ENCODE measurements at regions of chr13 and their contacts with region 1.

Region 1: DNA sequence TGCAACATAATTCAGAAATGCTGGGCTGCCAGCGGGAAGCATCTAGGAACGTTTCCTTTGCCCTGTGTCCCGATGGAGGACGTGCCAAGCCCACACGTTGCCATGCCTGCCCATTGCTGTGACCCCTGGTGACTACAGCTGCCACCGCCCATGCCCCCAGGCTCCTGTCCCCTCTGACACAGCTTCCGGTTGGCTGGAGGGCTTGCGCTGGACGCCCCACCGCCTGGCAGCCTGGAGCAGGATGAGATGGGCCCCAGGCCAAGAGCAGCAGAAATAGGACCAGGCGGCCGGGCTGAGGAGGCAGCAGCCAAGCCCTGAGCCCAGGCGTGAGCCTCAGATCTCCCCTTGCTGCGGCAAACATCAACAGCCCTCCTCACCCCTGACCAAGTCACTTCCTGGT is 125.9 kb downstream of the COL4A2 start:
- DNase-seq: peak; percentile 51 to 74
- ATAC-seq: peak; percentile 72 to 83 (median 76)
- H3K4me3 ChIP-seq: no peak overlapping the region
- H3K27ac ChIP-seq: peak overlapping the region; percentile 2
- H3K4me1 ChIP-seq: peaks cover 15% of the 10 kb centered on the region
- H3K27me3 ChIP-seq: no peaks in the 10 kb centered on the region
- CTCF ChIP-seq: no peak

Region 2: GRCh38 chr13:110220471-110220870 is 212.5 kb before region 1 on chr13:
- intact Hi-C with region 1: loop called in 1 of 2 experiments (anchors 5 kb)
- DNase-seq: no peak
- ATAC-seq: no peak
- H3K4me3 ChIP-seq: no peak overlapping the region
- H3K27ac ChIP-seq: no peak overlapping the region
- H3K4me1 ChIP-seq: peaks cover 21% of the 10 kb centered on the region
- H3K27me3 ChIP-seq: no peaks in the 10 kb centered on the region
- CTCF ChIP-seq: no peak

Measured in psoas muscle (tissue), 8 donors.